CD4-positive, alpha-beta memory T cell (primary cell): ENCODE measurements at regions of chr13 and their contacts with region 1.

Region 1: DNA sequence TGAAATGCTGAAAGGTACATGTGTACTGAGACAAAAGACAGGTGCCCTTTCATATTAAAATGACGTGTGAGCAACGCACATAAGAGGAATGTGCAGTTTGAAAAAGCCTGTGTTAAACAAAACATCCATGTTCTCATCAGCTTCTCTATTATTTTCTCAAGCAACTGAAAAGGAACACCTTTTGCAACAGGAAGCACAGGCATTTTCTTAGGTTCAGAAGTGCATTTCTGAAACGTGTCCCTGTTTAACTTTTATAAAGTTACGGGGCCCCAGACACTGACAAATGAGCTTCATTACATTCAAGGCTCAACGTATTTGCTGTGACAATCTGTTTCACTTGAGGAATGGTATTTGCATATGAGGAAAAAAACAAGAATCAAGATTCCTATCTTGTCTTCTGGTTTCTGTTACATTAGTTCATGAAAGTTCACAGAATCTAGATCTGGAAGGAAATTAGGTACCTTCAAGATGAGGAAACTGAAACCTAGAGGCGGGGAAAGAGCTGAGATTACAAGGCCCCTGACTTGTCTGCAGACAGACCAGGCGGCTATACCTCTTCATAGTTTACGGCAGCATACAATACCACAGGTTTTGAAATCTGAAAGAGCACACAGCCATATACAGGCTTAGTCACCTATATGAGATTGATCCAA is 431.7 kb downstream of the KLF12 start:
- DNase-seq: peak; percentile 52 to 84 (median 74)
- H3K4me3 ChIP-seq: no peak overlapping the region
- H3K4me3 Mint-ChIP-seq: peak overlapping the region; percentile 67 to 88 (median 80)
- H3K27ac ChIP-seq: peak overlapping the region; percentile 29
- H3K27ac Mint-ChIP-seq: peak overlapping the region; percentile 89 to 98 (median 95)
- H3K4me1 ChIP-seq: peaks cover 46% of the 10 kb centered on the region
- H3K4me1 Mint-ChIP-seq: peaks cover 31 to 62% (median 33%) of the 10 kb centered on the region in 4 donors
- H3K27me3 ChIP-seq: no peaks in the 10 kb centered on the region
- H3K27me3 Mint-ChIP-seq: no peaks in the 10 kb centered on the region

Region 2: GRCh38 chr13:73058736-73059459 is 643.6 kb before region 1 on chr13 and contains the start of gene KLF5:
- CTCF ChIA-PET with region 1: interaction called, 4 read pairs
- POLR2A ChIA-PET with region 1: interaction called, 7 read pairs
- intact Hi-C with region 1: loop called (anchors 5 kb)
- DNase-seq: peak; percentile 93 to 97 (median 94)
- H3K4me3 ChIP-seq: peak within 1 kb of the TSS; percentile 52 to 60
- H3K4me3 Mint-ChIP-seq: peak within 1 kb of the TSS; percentile 87 to 95 (median 92)
- H3K27ac ChIP-seq: no peak within 1 kb of the TSS
- H3K27ac Mint-ChIP-seq: peak within 1 kb of the TSS; percentile 72 to 94 (median 84)
- H3K4me1 ChIP-seq: peaks cover 19% of the 10 kb centered on the region
- H3K4me1 Mint-ChIP-seq: peaks cover 14 to 30% (median 18%) of the 10 kb centered on the region in 4 donors
- H3K27me3 ChIP-seq: peaks cover 11% of the 10 kb centered on the region
- H3K27me3 Mint-ChIP-seq: peaks cover 10 to 13% of the 10 kb centered on the region in 2 donors
- total RNA-seq, gene KLF5: 5.0 to 5.4 TPM

Region 3: DNA sequence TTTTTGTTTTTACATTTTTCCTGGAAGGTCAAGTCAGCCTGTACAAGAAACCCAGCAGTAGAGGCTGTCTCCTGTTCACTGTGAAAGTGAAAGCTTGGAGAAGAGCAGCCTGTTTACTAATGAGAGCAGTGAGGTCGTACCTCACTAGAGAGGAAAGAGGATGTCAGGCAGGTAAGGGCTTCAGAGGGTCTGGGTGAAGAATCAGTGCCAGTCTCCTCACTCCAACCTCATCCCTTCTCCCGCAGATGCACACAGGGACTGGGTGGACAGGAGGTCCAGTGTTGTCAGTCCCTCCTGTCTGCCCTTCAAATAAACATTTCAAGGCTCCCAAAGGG is 181.3 kb before region 1 on chr13:
- CTCF ChIA-PET with region 1: no interaction called
- POLR2A ChIA-PET with region 1: interaction called, 16 read pairs
- intact Hi-C with region 1: loop called (anchors 5 kb)
- DNase-seq: peak in 4 of 5 donors; percentile 20 to 37 (median 29)
- H3K4me3 ChIP-seq: peak overlapping the region; percentile 33 to 35
- H3K4me3 Mint-ChIP-seq: peak overlapping the region; percentile 82 to 93 (median 89)
- H3K27ac ChIP-seq: peak overlapping the region; percentile 23
- H3K27ac Mint-ChIP-seq: peak overlapping the region; percentile 44 to 95 (median 85)
- H3K4me1 ChIP-seq: peaks cover 16% of the 10 kb centered on the region
- H3K4me1 Mint-ChIP-seq: peaks cover 11 to 17% (median 15%) of the 10 kb centered on the region in 4 donors
- H3K27me3 ChIP-seq: no peaks in the 10 kb centered on the region
- H3K27me3 Mint-ChIP-seq: peaks cover 0 to 2% of the 10 kb centered on the region in 2 donors

Region 4: GRCh38 chr13:73625562-73626339 is 76.8 kb before region 1 on chr13:
- CTCF ChIA-PET with region 1: interaction called, 3 read pairs
- POLR2A ChIA-PET with region 1: no interaction called
- intact Hi-C with region 1: loop called (anchors 5 kb)
- DNase-seq: peak; percentile 51 to 74 (median 62)
- H3K4me3 ChIP-seq: no peak overlapping the region
- H3K4me3 Mint-ChIP-seq: peak overlapping the region in 7 of 8 donors; percentile 39 to 76 (median 51)
- H3K27ac ChIP-seq: no peak overlapping the region
- H3K27ac Mint-ChIP-seq: peak overlapping the region; percentile 43 to 86 (median 76)
- H3K4me1 ChIP-seq: peaks cover 52% of the 10 kb centered on the region
- H3K4me1 Mint-ChIP-seq: peaks cover 35 to 60% (median 45%) of the 10 kb centered on the region in 4 donors
- H3K27me3 ChIP-seq: no peaks in the 10 kb centered on the region
- H3K27me3 Mint-ChIP-seq: no peaks in the 10 kb centered on the region

Region 5: GRCh38 chr13:73754727-73755292 is 52.3 kb after region 1 on chr13:
- CTCF ChIA-PET with region 1: no interaction called
- POLR2A ChIA-PET with region 1: no interaction called
- intact Hi-C with region 1: no loop called
- DNase-seq: peak in 4 of 5 donors; percentile 42 to 61 (median 50)
- H3K4me3 ChIP-seq: no peak overlapping the region
- H3K4me3 Mint-ChIP-seq: no peak overlapping the region
- H3K27ac ChIP-seq: no peak overlapping the region
- H3K27ac Mint-ChIP-seq: peak overlapping the region in 6 of 7 donors; percentile 8 to 84 (median 56)
- H3K4me1 ChIP-seq: peaks cover 43% of the 10 kb centered on the region
- H3K4me1 Mint-ChIP-seq: peaks cover 36 to 58% (median 49%) of the 10 kb centered on the region in 4 donors
- H3K27me3 ChIP-seq: no peaks in the 10 kb centered on the region
- H3K27me3 Mint-ChIP-seq: no peaks in the 10 kb centered on the region

Region 6: GRCh38 chr13:73809561-73809960 is 107.0 kb after region 1 on chr13:
- CTCF ChIA-PET with region 1: no interaction called
- POLR2A ChIA-PET with region 1: no interaction called
- intact Hi-C with region 1: no loop called
- DNase-seq: no peak
- H3K4me3 ChIP-seq: no peak overlapping the region
- H3K4me3 Mint-ChIP-seq: no peak overlapping the region
- H3K27ac ChIP-seq: no peak overlapping the region
- H3K27ac Mint-ChIP-seq: peak overlapping the region in 1 of 7 donors; percentile 0
- H3K4me1 ChIP-seq: no peaks in the 10 kb centered on the region
- H3K4me1 Mint-ChIP-seq: peaks cover 14 to 40% (median 26%) of the 10 kb centered on the region in 4 donors
- H3K27me3 ChIP-seq: no peaks in the 10 kb centered on the region
- H3K27me3 Mint-ChIP-seq: no peaks in the 10 kb centered on the region